ENCODE measurements at regions of chr9 and their contacts with region 1.

Region 1: GRCh38 chr9:113657703-113658544 is 194.4 kb downstream of the RGS3 start:
- DNase-seq: peak; percentile 76 to 87 (median 82)
- H3K4me3 ChIP-seq: no peak overlapping the region
- H3K27ac ChIP-seq: no peak overlapping the region
- H3K4me1 ChIP-seq: peaks cover 0 to 17% (median 8%) of the 10 kb centered on the region in 4 experiments
- H3K27me3 ChIP-seq: no peaks in the 10 kb centered on the region

Region 2: DNA sequence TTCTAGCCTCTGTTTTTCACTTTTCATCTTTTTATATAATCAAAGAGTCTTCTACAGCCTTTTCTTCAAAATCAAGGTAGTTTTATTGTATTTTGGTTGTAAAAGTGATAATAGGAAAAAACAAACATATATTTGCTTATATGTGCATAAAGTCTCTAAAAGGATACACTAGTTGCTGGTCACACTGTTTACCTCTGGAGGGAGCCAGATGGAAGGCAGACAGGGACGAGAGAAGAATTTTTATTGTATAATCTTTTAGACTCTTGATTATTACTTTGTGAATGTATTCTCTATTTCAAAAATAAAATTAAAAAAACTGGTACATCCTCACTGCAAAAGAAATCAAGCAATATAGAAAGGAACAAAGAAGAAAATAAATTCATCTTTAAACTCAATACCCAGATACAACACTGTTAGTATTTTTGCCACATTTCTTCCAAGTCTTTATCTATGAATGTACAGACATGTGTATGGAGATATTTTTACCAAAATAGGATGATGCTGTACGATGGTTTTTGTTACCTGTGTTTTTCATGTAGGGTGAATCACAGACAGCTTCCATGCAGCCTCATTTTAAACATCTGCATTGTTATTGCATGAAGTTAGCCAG is 348.6 kb before region 1 on chr9:
- CTCF ChIA-PET with region 1: interaction called, 13 read pairs
- POLR2A ChIA-PET with region 1: no interaction called
- DNase-seq: peak; percentile 50 to 72 (median 68)
- H3K4me3 ChIP-seq: no peak overlapping the region
- H3K27ac ChIP-seq: no peak overlapping the region
- H3K4me1 ChIP-seq: no peaks in the 10 kb centered on the region
- H3K27me3 ChIP-seq: no peaks in the 10 kb centered on the region

Region 3: DNA sequence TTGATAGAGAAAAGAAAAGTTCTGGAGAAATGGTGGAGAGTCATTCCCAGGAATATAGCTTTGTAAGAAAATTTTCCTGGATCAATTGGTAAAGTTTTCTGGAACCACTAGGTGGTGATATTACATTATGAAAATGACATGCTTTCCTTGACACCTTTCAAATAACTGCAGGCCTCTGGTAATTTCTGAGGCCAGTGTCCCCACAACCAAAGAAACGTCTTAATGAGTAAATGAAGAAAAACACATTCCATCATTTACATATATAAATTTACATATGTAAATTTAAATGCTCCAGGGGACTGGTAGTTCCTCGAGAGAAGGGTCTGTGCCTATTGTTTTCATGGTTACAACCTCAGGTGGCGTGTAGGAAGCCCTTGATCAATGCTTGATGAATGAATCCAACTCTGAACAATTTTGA is 211.6 kb before region 1 on chr9:
- CTCF ChIA-PET with region 1: interaction called, 88 read pairs
- POLR2A ChIA-PET with region 1: no interaction called
- DNase-seq: peak; percentile 21 to 47 (median 45)
- H3K4me3 ChIP-seq: no peak overlapping the region
- H3K27ac ChIP-seq: no peak overlapping the region
- H3K4me1 ChIP-seq: peaks cover 4 to 18% (median 16%) of the 10 kb centered on the region in 4 experiments
- H3K27me3 ChIP-seq: no peaks in the 10 kb centered on the region

Region 4: GRCh38 chr9:113602126-113603044 is 55.5 kb before region 1 on chr9:
- CTCF ChIA-PET with region 1: interaction called, 494 read pairs
- POLR2A ChIA-PET with region 1: no interaction called
- DNase-seq: peak in 2 of 3 donors; percentile 80 to 82
- H3K4me3 ChIP-seq: no peak overlapping the region
- H3K27ac ChIP-seq: no peak overlapping the region
- H3K4me1 ChIP-seq: peaks cover 0 to 22% (median 3%) of the 10 kb centered on the region in 4 experiments
- H3K27me3 ChIP-seq: no peaks in the 10 kb centered on the region

Region 5: GRCh38 chr9:113668061-113668460 is 10.1 kb after region 1 on chr9:
- CTCF ChIA-PET with region 1: interaction called, 38 read pairs
- POLR2A ChIA-PET with region 1: no interaction called
- DNase-seq: no peak
- H3K4me3 ChIP-seq: no peak overlapping the region
- H3K27ac ChIP-seq: no peak overlapping the region
- H3K4me1 ChIP-seq: no peaks in the 10 kb centered on the region
- H3K27me3 ChIP-seq: no peaks in the 10 kb centered on the region

Measured in common myeloid progenitor, CD34-positive (primary cell).